ENCODE measurements at regions of chr12 and their contacts with region 1.

Region 1: GRCh38 chr12:122399592-122400373 is 22.7 kb downstream of the CLIP1 start:
- DNase-seq: peak; percentile 77
- ATAC-seq: peak; percentile 66
- H3K4me3 ChIP-seq: peak overlapping the region in 1 of 5 experiments; percentile 6
- H3K4me3 Mint-ChIP-seq: peak overlapping the region; percentile 75
- H3K27ac ChIP-seq: peak overlapping the region in 1 of 2 donors; percentile 38
- H3K27ac Mint-ChIP-seq: peak overlapping the region; percentile 73
- H3K4me1 ChIP-seq: peaks cover 23 to 31% of the 10 kb centered on the region in 2 donors
- H3K4me1 Mint-ChIP-seq: peaks cover 31% of the 10 kb centered on the region
- H3K27me3 ChIP-seq: no peaks in the 10 kb centered on the region
- H3K27me3 Mint-ChIP-seq: no peaks in the 10 kb centered on the region
- CTCF ChIP-seq: peak; percentile 87

Region 2: DNA sequence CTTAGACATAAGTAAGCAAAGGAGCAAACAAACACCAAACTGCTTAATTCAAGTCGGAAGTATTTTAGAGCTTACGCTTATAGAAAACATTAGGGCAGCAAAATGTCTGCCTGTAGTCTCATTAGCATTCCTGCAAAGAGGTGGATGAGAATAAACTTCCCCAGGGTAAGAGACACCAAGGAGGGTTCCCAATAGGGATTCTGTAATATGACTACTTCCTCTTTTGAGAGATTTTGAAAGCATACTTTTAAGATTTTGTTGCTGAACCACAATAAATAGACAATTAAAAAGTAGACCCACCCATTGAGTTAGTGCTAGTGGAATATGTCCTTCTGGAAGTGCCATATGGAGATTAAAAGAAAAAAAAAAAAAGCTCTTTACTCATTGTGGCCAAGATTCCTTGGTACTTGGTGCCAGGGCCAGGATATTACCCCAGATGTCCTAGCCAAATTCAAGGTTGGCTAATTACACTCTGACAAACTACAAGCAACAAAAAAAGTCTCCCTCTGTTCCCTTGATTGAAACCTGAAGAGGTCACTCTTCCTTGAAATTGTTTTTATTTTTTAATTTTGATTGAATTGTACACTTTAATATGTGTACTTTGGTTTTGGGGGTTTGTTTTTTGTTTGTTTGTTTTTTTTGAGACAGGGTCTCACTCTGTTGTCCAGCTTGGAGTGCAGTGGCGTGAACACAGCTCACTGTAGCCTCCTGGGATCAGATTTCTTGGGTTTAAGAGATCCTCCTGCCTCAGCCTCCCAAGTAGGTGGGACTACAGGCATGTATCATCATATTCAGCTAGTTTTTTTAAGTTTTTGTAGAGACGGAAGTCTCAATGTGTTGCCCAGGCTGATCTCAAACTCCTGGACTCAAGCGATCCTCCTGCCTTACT is 14.0 kb after region 1 on chr12:
- CTCF ChIA-PET with region 1: interaction called, 11 read pairs
- POLR2A ChIA-PET with region 1: interaction called, 8 read pairs
- intact Hi-C with region 1: no loop called
- DNase-seq: peak; percentile 47
- ATAC-seq: no peak
- H3K4me3 ChIP-seq: no peak overlapping the region
- H3K4me3 Mint-ChIP-seq: peak overlapping the region; percentile 12
- H3K27ac ChIP-seq: peak overlapping the region; percentile 23 to 43
- H3K27ac Mint-ChIP-seq: peak overlapping the region; percentile 4
- H3K4me1 ChIP-seq: peaks cover 22 to 33% of the 10 kb centered on the region in 2 donors
- H3K4me1 Mint-ChIP-seq: peaks cover 43% of the 10 kb centered on the region
- H3K27me3 ChIP-seq: no peaks in the 10 kb centered on the region
- H3K27me3 Mint-ChIP-seq: no peaks in the 10 kb centered on the region
- CTCF ChIP-seq: no peak

Measured in B cell (primary cell).